ENCODE measurements at regions of chr5 and their contacts with region 1.

Region 1: DNA sequence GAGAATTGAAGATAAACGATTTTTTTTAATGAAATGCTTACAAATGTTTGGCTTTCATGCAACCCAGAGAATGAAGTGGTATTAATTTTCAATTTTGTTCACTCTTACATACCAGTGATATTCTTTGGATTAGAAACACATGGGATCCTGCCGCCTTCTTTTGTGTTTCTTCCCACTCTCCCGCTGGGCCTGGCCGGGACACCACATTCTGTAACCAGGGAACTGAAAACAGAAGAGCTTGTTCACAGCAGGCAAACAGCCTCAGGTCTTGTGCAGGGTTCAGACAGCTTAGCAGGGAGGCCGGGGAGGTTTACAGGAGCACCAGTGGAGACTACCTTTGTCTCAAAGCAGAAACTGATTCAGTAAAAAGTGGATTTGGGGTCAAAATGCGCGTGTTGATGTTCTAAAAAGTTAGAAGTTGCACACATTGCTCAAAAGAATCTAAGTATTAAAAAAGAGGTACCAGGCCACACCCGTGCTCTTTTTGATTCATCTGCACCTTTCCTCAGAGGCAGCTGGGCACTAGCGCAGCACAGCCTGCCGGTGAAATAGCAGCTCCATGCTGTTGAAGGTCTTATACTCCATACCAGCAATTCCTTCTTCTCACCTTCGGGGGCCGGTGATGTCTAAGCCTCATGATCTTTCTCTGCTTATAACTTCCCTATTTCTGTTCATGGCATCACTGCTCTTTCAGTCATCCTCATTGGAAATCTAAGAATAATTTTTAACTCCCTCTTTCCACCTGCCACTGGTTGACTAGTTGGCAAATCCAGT is 67.1 kb downstream of the GRAMD2B start:
- DNase-seq: no peak
- ATAC-seq: peak; percentile 75
- H3K4me3 ChIP-seq: no peak overlapping the region
- H3K27ac ChIP-seq: no peak overlapping the region
- H3K4me1 ChIP-seq: no peaks in the 10 kb centered on the region
- H3K27me3 ChIP-seq: no peaks in the 10 kb centered on the region
- CTCF ChIP-seq: no peak
- EP300 ChIP-seq: no peak
- POLR2A ChIP-seq: no peak
- RAD21 ChIP-seq: no peak

Region 2: DNA sequence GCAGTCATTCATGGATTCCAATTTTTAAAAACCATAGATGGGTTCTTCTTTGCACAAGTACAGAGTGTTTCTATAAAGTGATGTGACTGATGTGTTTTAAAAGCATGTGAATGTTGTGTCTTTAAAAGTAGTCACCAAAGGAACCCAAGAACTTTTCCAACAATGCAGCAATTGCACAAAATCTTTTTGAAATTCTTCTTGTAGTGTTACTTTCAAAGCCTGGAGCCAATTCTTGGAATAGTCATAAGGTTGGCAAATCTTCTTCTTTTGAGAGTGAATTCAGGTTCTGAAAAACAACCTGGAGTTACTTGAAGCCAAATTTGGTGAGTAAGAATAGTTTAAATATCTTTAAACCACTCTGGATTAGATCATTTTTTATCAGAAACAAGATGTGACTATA is 56.7 kb before region 1 on chr5:
- CTCF ChIA-PET with region 1: no interaction called
- POLR2A ChIA-PET with region 1: no interaction called
- in situ Hi-C with region 1: no loop called
- intact Hi-C with region 1: no loop called
- DNase-seq: no peak
- ATAC-seq: no peak
- H3K4me3 ChIP-seq: no peak overlapping the region
- H3K27ac ChIP-seq: no peak overlapping the region
- H3K4me1 ChIP-seq: no peaks in the 10 kb centered on the region
- H3K27me3 ChIP-seq: no peaks in the 10 kb centered on the region
- CTCF ChIP-seq: no peak
- EP300 ChIP-seq: no peak
- POLR2A ChIP-seq: no peak
- RAD21 ChIP-seq: no peak

Region 3: GRCh38 chr5:126536874-126537273 is 46.5 kb after region 1 on chr5:
- CTCF ChIA-PET with region 1: no interaction called
- POLR2A ChIA-PET with region 1: no interaction called
- in situ Hi-C with region 1: no loop called
- intact Hi-C with region 1: loop called (anchors 5 kb)
- DNase-seq: no peak
- ATAC-seq: no peak
- H3K4me3 ChIP-seq: no peak overlapping the region
- H3K27ac ChIP-seq: no peak overlapping the region
- H3K4me1 ChIP-seq: peaks cover 14% of the 10 kb centered on the region
- H3K27me3 ChIP-seq: no peaks in the 10 kb centered on the region; a peak in 1 of 5 replicates
- CTCF ChIP-seq: no peak
- EP300 ChIP-seq: no peak
- POLR2A ChIP-seq: no peak
- RAD21 ChIP-seq: no peak

Measured in HepG2 (cell line).